Activated naive CD4-positive, alpha-beta T cell treated with anti-CD3 and anti-CD28 coated beads, Interleukin-2, amount 10 ng/mL, durations not matched to agents 7 days and 5 days (primary cell): ENCODE measurements at regions of chr2 and their contacts with region 1.

Region 1: DNA sequence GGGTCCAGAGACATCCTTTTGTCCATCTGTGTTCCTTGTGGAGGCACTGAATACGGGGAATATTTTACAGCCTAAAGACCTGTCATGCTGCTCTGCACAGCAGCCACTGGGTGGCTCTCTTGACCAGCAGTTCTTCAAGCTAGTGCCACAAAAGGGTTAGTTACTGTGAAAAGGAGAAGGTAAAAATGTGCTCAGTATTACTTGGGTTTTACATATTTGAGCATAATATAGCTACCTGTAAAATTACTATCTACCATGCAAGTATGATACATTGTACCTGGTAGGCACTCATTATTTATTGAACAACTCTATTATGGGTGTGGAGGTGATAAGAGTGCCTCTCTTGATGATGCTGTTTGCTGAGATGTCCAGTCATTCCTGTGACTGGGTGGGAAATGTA is 23.6 kb downstream of the FZD5 start:
- DNase-seq: peak; percentile 66
- H3K4me3 Mint-ChIP-seq: no peak overlapping the region
- H3K27ac Mint-ChIP-seq: no peak overlapping the region
- H3K4me1 Mint-ChIP-seq: no peaks in the 10 kb centered on the region
- H3K27me3 Mint-ChIP-seq: no peaks in the 10 kb centered on the region

Region 2: DNA sequence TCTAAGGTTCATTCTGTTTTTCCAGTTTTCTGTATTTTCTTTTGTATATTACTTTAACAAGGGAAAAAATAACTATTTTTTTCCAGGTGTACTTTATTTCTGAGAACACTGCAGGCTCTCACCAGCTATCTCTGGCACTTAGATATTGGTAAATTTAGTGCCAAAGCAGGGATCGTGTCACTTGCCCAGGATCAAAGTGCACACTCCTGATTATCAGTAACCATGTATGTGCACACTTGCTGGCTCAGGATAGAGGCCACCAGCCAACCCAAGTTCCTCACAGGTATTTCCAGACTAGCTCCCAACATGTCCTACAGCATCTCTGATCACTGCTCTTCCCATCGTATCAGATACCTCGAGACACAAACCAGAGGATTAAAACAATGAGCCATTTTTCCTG is 29.3 kb after region 1 on chr2:
- CTCF ChIA-PET with region 1: no interaction called
- DNase-seq: no peak
- H3K4me3 Mint-ChIP-seq: no peak overlapping the region
- H3K27ac Mint-ChIP-seq: no peak overlapping the region
- H3K4me1 Mint-ChIP-seq: peaks cover 8% of the 10 kb centered on the region
- H3K27me3 Mint-ChIP-seq: peaks cover 44% of the 10 kb centered on the region

Region 3: DNA sequence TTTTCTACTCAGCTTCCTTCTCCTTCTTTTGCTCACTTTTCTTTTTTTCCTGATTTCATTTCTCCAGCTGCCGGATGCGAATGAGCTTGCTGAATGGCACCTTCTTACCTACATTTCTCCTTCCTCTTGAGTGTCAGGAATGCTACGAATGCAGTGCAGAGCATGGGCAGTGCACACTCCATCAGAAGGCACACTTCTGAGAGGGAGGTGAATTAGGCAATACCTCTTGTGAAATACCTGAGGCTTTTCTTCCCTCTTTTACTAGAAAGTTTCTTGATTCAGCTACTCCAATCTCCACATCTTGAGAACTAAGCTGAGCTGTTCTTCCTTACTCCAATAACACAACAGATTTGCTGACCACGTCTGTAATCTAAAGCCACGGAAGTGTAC is 228.1 kb after region 1 on chr2:
- CTCF ChIA-PET with region 1: interaction called, 61 read pairs
- DNase-seq: no peak
- H3K4me3 Mint-ChIP-seq: no peak overlapping the region
- H3K27ac Mint-ChIP-seq: no peak overlapping the region
- H3K4me1 Mint-ChIP-seq: peaks cover 16% of the 10 kb centered on the region
- H3K27me3 Mint-ChIP-seq: no peaks in the 10 kb centered on the region

Region 4: DNA sequence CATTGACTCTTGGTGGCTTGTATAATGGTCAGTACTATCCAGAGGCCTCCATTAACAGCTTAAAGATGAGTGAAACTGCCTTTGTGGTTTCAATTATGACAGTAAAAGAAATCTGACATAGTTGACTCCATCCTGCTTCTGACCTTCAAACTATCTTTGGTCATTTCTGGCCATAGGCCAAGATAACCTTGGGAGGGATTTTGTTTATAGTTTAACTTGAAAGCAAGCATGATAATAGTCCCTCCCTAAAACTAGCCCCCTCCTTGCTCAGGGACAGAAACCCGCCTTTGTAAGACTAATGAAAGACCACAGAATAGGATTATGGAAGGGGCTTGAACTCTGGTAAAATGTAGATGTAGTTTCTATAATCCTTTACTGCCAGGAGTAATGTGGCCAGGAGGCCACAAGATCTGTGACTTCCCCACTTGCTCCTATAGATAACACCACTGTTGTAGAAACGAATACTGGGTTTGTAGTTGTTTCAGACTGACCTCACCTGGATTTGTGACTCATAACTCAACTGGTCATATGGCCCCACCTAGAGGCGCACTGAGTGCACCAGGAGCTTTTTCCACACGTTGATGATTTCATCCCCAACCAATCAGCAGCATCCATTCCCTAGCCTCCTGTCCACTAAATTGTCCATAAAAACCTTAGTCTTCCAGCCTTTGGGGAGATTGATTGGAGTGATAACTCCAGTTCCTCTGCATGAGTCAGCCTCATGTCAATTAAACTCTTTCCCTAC is 287.8 kb after region 1 on chr2:
- CTCF ChIA-PET with region 1: interaction called, 57 read pairs
- DNase-seq: peak; percentile 52
- H3K4me3 Mint-ChIP-seq: no peak overlapping the region
- H3K27ac Mint-ChIP-seq: no peak overlapping the region
- H3K4me1 Mint-ChIP-seq: no peaks in the 10 kb centered on the region
- H3K27me3 Mint-ChIP-seq: peaks cover 10% of the 10 kb centered on the region

Region 5: DNA sequence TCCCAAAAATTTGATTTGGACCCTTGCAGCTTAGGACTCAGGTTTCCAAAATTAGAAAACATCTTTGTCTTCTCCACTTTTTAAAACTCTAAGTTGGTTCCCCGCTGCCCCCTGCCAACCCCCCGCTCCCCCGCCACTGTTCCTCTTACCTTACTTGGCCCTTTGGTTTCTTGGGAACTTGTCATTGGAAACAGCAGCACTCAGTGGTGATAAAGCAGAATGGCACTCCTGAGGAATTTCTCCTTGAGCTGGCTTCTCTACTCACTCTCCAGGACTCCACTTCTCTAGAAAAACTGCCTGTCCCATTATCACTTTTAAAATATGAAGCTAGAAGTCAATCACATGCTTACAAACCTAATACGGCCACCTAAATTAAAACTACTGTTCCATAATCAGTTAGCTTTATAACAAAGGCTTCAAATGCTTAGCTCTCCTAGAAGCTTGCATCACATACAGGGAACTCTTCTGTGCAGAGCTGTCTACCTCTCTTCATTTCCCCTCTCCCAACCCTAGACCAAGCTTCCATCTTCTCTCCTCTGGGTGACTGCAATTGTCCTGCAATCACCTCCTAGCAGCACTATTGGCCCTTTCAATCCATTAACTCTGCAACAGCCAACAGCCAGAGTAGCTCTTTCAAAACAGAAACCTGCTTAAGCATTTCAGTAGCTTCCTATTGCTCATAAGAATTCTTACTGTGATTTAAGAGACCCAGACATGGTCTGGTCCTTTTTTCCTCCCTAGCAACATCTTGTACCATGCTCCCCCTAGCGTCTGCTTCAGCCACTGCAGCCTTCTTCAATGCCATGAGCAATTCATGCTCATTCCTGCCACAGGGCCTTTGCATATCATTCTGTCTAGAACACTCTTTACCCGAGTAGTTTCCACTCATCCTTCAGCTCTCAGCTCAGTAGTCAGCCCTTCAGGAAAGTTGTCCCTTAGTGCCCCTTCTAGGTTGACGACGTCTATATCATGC is 294.4 kb after region 1 on chr2:
- CTCF ChIA-PET with region 1: interaction called, 57 read pairs
- DNase-seq: peak; percentile 82
- H3K4me3 Mint-ChIP-seq: no peak overlapping the region
- H3K27ac Mint-ChIP-seq: no peak overlapping the region
- H3K4me1 Mint-ChIP-seq: no peaks in the 10 kb centered on the region
- H3K27me3 Mint-ChIP-seq: peaks cover 8% of the 10 kb centered on the region

Region 6: DNA sequence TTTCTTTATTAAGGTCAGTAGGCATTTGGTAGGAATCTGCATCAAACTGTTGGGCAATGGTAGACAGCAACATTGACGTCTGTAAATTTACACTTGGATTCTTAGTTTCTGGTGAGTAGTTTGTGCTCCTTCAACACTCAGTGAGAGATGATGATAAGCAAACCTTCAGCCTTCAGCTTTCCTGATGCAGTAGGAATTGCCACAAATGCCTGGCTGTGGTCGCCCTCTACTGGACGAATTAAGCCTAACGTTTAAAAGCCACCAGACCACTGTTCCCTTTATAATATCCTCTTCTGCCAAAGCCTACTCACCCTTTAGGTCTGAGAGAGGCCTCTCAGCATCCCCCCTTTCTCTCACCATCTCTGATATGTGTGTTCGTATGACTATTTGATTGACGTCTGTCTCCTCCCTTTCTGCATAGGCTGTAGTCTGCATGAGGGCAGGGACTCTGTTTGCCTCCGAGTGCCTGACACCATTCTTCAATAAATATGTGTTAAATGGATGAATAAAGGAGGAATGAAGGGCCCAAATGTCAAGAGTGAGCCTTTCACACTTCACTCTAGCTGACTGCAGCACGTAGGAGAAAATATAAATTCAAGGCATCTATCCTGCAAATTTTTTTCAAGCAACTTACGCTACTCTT is 326.2 kb after region 1 on chr2:
- CTCF ChIA-PET with region 1: interaction called, 18 read pairs
- DNase-seq: peak; percentile 66
- H3K4me3 Mint-ChIP-seq: no peak overlapping the region
- H3K27ac Mint-ChIP-seq: no peak overlapping the region
- H3K4me1 Mint-ChIP-seq: no peaks in the 10 kb centered on the region
- H3K27me3 Mint-ChIP-seq: peaks cover 11% of the 10 kb centered on the region